ENCODE measurements at regions of chr7 and their contacts with region 1.

Region 1: DNA sequence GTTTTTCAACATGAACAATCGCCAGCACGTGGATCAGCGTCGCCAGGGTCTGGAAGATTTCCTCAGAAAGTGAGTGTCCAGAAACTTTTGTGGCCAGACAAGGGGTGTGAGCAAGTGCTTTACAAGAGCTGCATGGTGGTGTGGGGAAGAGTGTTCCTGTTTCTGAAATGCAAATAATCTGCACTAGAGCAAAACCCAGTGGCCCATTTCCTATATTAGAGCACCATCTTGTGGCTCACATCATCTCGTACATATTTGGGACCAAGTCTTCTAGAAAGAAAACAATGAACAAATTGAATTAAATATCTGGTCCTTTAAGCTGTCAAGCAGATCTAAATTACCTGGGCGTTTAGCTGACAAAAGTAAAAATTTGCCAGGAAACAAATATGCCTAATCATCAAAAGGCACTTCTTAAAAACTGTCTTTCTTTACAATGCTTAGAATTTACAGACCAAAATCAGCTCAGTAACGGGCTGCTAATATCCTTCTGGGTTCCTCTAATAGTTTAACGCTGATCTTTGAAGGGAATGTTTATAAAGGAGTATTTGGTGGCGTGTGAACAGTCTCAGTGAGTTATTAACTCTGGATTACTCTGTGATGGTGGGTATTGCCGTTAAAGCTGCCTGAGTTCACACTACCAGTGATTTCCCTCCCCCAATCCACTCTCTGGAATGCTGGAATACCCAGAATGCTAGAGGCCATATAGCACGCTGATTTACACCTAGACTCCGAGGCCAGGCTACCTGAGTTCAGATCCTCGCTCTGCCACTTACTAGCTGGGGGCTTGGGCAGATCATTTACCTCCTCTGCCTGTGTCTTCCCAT is 73.6 kb downstream of the SNX10 start:
- DNase-seq: peak; percentile 55 to 70
- H3K4me3 ChIP-seq: no peak overlapping the region
- H3K4me3 Mint-ChIP-seq: peak overlapping the region; percentile 49
- H3K27ac Mint-ChIP-seq: peak overlapping the region; percentile 53
- H3K4me1 ChIP-seq: no peaks in the 10 kb centered on the region
- H3K4me1 Mint-ChIP-seq: peaks cover 10% of the 10 kb centered on the region
- H3K27me3 ChIP-seq: no peaks in the 10 kb centered on the region
- H3K27me3 Mint-ChIP-seq: no peaks in the 10 kb centered on the region
- CTCF ChIP-seq: peak; percentile 57 to 84

Region 2: GRCh38 chr7:26200444-26201246 is 164.6 kb before region 1 on chr7 and contains the start of gene HNRNPA2B1:
- CTCF ChIA-PET with region 1: interaction called, 3 read pairs
- POLR2A ChIA-PET with region 1: no interaction called
- intact Hi-C with region 1: loop called (anchors 1 kb)
- DNase-seq: peak; percentile 96
- H3K4me3 ChIP-seq: peak within 1 kb of the TSS; percentile 99
- H3K4me3 Mint-ChIP-seq: peak within 1 kb of the TSS; percentile 99
- H3K27ac Mint-ChIP-seq: peak within 1 kb of the TSS; percentile 100
- H3K4me1 ChIP-seq: peaks cover 21% of the 10 kb centered on the region
- H3K4me1 Mint-ChIP-seq: peaks cover 26% of the 10 kb centered on the region
- H3K27me3 ChIP-seq: no peaks in the 10 kb centered on the region
- H3K27me3 Mint-ChIP-seq: no peaks in the 10 kb centered on the region
- CTCF ChIP-seq: no peak
- total RNA-seq, gene HNRNPA2B1: 799 and 839 TPM in 2 replicates

Region 3: DNA sequence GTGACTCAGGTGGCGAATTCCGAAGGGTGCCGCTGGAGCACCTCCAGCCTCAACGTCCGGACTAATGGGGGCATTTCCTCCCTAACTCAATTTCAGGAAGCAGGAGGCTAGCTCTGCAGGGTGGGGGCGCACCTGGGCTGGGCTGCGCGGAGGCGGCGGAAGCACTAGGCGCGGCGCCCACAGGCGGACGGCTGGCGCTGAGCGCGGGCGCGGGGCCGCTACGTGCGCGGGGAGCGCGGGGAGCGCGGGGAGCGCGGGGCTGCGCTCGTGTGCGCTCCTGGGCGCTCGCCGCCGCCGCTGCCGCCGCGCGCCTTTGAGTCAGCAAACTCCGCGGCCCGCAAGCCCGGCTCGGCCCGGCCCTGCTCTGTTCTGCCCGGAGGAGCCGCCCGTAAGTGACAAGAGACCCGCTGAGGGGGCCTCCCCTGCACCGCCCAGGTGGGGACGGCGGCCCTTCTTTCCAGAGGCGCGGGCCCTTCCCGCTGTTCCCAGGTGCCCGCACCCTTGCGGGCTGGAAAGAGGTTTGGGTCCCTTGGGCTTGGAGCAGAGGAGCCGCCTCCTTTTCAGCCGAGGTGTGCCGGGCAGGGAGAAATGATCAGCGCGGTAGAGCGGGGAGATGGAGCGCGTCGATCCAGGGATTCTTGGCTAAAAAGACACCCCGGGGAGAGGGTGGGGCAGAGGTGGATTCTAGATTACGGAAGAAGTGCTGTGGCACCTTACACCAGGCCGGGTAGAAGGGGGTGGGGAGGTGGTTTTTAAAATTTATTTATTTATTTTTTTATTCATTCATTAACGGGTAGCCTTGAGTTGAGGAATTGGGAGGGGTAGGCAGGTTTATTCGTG is 73.4 kb before region 1 on chr7 and contains the start of gene SNX10:
- CTCF ChIA-PET with region 1: interaction called, 4 read pairs
- POLR2A ChIA-PET with region 1: no interaction called
- intact Hi-C with region 1: loop called (anchors 2 kb)
- DNase-seq: peak; percentile 75 to 84
- H3K4me3 ChIP-seq: peak within 1 kb of the TSS; percentile 62
- H3K4me3 Mint-ChIP-seq: peak within 1 kb of the TSS; percentile 78
- H3K27ac Mint-ChIP-seq: peak within 1 kb of the TSS; percentile 74
- H3K4me1 ChIP-seq: no peaks in the 10 kb centered on the region
- H3K4me1 Mint-ChIP-seq: peaks cover 10% of the 10 kb centered on the region
- H3K27me3 ChIP-seq: no peaks in the 10 kb centered on the region
- H3K27me3 Mint-ChIP-seq: no peaks in the 10 kb centered on the region
- CTCF ChIP-seq: peak; percentile 28 to 63
- total RNA-seq, gene SNX10: 7.6 and 8.8 TPM in 2 replicates

Region 4: GRCh38 chr7:26646336-26647053 is 281.2 kb after region 1 on chr7:
- CTCF ChIA-PET with region 1: no interaction called
- POLR2A ChIA-PET with region 1: no interaction called
- intact Hi-C with region 1: no loop called
- DNase-seq: no peak
- H3K4me3 ChIP-seq: no peak overlapping the region
- H3K4me3 Mint-ChIP-seq: no peak overlapping the region
- H3K27ac Mint-ChIP-seq: no peak overlapping the region
- H3K4me1 ChIP-seq: no peaks in the 10 kb centered on the region
- H3K4me1 Mint-ChIP-seq: no peaks in the 10 kb centered on the region
- H3K27me3 ChIP-seq: no peaks in the 10 kb centered on the region
- H3K27me3 Mint-ChIP-seq: peaks cover 6% of the 10 kb centered on the region
- CTCF ChIP-seq: no peak

Region 5: GRCh38 chr7:26667500-26668133 is 302.3 kb after region 1 on chr7:
- CTCF ChIA-PET with region 1: interaction called, 43 read pairs
- POLR2A ChIA-PET with region 1: interaction called, 3 read pairs
- intact Hi-C with region 1: loop called (anchors 1 kb)
- DNase-seq: peak; percentile 85
- H3K4me3 ChIP-seq: no peak overlapping the region
- H3K4me3 Mint-ChIP-seq: no peak overlapping the region
- H3K27ac Mint-ChIP-seq: no peak overlapping the region
- H3K4me1 ChIP-seq: no peaks in the 10 kb centered on the region
- H3K4me1 Mint-ChIP-seq: no peaks in the 10 kb centered on the region
- H3K27me3 ChIP-seq: no peaks in the 10 kb centered on the region
- H3K27me3 Mint-ChIP-seq: no peaks in the 10 kb centered on the region
- CTCF ChIP-seq: peak; percentile 81 to 87

Measured in Caco-2 (cell line).